Esophagus squamous epithelium (tissue), 5 donors: ENCODE measurements at regions of chr16 and their contacts with region 1.

Region 1: DNA sequence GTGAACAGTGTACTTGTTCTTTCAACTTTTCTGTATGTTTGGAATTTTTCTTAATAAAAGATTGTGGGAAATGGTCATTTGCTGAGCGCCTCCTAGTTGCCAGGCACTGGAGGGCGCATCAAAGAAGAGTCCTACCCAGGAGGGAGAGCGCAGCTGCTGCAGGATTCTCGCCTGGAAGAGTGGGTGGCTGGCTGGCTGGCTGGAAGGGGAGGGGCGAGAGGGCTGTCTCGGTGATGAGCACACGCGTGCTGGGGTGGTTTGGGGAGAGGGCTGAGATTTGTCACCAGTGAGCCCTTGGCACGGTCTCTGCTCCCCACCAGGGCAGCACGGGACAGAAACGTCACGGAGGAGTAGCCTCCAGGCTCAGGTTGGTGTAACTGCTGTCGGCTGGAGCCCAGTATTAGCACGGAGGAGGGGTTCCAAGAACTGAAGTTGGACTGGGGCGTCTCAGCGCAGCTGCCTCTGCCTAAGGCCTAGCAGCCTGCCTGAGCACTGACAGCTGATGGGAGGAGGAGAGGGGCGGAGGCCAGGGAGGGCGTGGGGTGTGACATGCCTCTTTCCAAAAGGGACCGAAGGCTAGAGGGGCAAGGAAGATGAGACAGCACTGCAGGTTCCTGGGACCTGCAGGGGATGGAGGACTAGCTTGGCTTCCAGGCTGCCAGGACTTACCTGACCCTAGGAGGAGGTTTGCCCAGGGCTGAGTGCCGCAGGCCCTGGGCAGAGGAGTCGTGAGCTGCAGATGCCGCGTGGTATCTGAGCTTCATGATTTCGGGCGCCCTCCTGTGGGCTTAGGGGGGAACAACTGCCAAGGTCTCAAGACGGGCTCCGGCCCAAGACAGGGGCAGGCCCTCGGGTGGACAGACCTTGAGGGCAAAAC is 5.7 kb downstream of the LDHD start:
- DNase-seq: peak; percentile 31
- H3K4me3 ChIP-seq: peak overlapping the region in 3 of 4 donors; percentile 30 to 54 (median 36)
- H3K27ac ChIP-seq: peak overlapping the region; percentile 61 to 90 (median 85)
- H3K4me1 ChIP-seq: peaks cover 53 to 95% (median 67%) of the 10 kb centered on the region in 3 donors
- H3K27me3 ChIP-seq: no peaks in the 10 kb centered on the region
- CTCF ChIP-seq: peak; percentile 75 to 96 (median 89)
- POLR2A ChIP-seq: peak in 1 of 4 donors; percentile 12

Region 2: DNA sequence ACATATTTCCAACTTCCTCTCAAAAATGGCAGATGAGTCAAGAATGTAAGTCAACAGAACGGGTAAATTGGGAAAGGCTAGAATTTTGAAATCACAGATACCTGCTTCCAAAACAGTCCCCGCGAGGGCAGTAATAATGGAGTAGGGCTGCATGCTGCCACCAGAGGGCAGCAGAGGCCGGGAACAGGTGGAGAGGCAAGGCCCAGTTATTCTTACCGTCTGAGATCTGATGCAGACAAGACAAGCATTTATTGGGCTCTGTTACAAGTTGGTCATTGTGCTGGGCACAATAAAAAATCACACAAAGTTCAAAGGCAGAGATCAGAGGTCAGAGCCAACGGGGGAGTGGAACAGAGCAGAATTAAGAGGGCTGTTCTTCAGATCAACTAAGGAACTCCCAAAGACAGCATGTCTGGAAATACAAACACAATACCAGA is 401.4 kb before region 1 on chr16:
- intact Hi-C with region 1: loop called (anchors 10 kb)
- DNase-seq: no peak
- H3K4me3 ChIP-seq: no peak overlapping the region
- H3K27ac ChIP-seq: no peak overlapping the region
- H3K4me1 ChIP-seq: peaks cover 0 to 6% (median 0%) of the 10 kb centered on the region in 3 donors
- H3K27me3 ChIP-seq: no peaks in the 10 kb centered on the region
- CTCF ChIP-seq: peak; percentile 78 to 98 (median 96)
- POLR2A ChIP-seq: no peak

Region 3: GRCh38 chr16:74998481-74999218 is 112.2 kb before region 1 on chr16 and contains the start of gene ZNRF1:
- intact Hi-C with region 1: loop called (anchors 2 kb)
- DNase-seq: no peak
- H3K4me3 ChIP-seq: peak within 1 kb of the TSS; percentile 76 to 97 (median 88)
- H3K27ac ChIP-seq: peak within 1 kb of the TSS; percentile 87 to 96 (median 91)
- H3K4me1 ChIP-seq: peaks cover 11 to 65% (median 30%) of the 10 kb centered on the region in 3 donors
- H3K27me3 ChIP-seq: no peaks in the 10 kb centered on the region
- CTCF ChIP-seq: peak; percentile 75 to 85 (median 82)
- POLR2A ChIP-seq: peak in 1 of 4 donors; percentile 44
- total RNA-seq, gene ZNRF1: 28.0 to 67.4 (median 33.5) TPM

Region 4: DNA sequence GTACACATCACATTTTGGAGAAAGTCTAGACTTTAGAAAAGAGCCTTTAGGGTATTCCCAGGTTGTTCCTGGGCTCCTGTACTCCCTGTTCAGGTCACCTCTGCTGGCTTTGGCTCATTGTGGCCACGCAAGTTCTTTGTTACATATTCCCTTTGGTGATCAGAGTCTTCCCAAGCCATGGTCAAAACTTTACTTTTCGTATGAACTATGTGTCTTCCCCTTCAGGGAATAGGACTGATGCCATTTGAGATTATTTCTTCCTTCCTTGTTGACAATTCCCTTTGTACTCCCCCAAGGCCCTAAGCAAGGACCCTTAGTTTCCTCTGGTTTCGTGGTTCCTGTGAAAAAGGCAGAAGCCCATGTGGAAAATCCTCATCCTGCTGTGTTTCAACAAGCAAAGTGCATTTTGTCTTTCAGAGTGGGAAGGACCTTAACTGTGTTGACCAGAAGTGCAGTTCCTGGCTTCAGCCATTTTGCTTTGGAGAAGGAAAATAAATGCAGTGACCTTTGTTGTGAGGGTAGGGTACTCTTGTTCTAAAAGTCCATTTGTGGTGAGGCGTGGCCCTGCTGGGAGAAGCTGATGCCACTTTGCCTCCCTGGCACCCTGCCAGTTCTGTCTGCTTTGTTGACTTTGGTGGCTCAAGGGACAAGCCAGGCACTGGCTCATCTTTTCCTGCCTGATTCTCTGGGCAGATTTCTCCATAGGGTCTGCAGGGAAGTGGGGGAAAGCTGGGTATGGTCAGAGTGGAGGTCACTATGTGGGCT is 56.9 kb before region 1 on chr16:
- intact Hi-C with region 1: no loop called
- DNase-seq: no peak
- H3K4me3 ChIP-seq: no peak overlapping the region
- H3K27ac ChIP-seq: peak overlapping the region in 2 of 4 donors; percentile 11 to 49
- H3K4me1 ChIP-seq: peaks cover 0 to 54% (median 9%) of the 10 kb centered on the region in 3 donors
- H3K27me3 ChIP-seq: no peaks in the 10 kb centered on the region
- CTCF ChIP-seq: no peak
- POLR2A ChIP-seq: no peak